ENCODE measurements at regions of chr5 and their contacts with region 1.

Region 1: DNA sequence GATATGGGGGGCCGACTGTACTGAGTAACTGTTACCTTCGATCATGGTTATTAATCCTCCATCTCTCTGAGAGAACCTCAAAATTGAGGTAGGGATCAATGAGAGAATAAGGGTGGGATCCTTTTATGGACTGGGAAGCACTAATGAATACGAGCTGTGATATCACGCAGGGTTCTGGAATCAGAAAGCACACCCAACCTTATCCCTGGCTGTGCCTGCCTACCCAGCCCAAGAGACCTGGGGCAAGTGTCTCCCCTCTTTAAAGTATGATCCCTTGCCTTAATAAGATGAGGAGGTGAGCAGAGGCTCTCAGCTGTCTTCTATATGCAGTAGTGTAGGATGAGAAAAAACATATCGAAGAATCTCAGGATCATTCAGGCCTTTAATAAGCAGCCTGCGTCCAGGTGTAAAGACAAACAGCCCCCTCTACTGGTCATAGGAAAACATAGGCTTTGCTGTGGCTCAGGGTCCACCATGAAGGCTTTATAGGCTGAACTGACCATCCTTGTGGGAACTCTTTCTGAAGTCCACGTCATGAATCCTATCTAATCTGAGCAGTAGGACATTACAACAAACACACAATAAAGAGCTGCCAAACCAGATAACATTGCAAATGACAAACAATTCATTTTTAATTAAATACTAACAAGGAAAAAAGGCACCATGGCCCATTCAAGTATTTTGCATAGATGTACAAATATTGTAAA is 16.8 kb downstream of the NIPAL4 start:
- DNase-seq: peak; percentile 70 to 75 (median 72)
- ATAC-seq: peak; percentile 95
- H3K4me3 ChIP-seq: no peak overlapping the region
- H3K27ac ChIP-seq: no peak overlapping the region
- H3K4me1 ChIP-seq: no peaks in the 10 kb centered on the region; a peak in 1 of 5 replicates
- H3K27me3 ChIP-seq: peaks cover 0 to 25% of the 10 kb centered on the region in 2 experiments; a peak in 3 of 5 replicates
- CTCF ChIP-seq: peak; percentile 71 to 92 (median 80)
- EP300 ChIP-seq: no peak
- POLR2A ChIP-seq: no peak
- RAD21 ChIP-seq: peak; percentile 84 to 87

Region 2: DNA sequence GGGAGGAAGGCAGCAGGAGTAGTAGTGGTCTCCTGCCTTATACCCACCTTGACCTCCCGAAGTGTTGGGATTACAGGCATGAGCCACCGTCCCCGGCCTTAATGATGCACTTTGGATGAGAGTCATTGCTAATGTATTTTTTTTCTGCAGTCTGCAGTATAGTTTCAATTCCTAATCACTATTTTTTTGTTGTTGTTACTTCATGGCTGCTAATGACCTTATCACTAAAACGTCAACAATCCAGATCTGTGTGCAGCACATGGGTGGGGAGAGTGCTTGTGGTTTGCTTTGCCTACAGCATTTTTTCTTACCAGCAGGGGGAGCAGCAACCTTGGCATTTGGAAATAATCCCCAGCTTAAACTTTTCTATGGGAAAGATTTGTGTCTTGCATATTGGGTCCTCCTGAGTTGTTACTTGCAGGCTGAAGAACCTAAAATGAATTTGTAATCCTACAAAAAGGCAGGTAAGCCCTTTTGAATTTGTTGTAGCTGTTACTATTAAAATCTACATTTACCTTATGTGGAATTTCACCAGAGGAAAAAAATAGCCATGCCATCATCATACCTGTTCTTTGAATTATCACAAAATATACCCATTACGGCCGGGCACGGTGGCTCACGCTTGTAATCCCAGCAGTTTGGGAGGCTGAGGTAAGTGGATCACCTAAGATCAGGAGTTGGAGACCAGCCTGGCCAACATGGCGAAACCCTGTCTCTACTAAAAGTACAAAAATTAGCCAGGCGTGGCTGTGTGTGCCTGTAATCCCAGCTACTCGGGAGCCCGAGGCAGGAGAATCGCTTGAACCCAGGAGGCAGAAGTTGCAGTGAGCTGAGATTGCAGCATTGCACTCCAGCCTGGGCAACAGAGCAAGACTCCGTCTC is 327.9 kb before region 1 on chr5:
- CTCF ChIA-PET with region 1: no interaction called
- POLR2A ChIA-PET with region 1: no interaction called
- in situ Hi-C with region 1: no loop called
- intact Hi-C with region 1: loop called (anchors 1 kb)
- DNase-seq: peak; percentile 71 to 79 (median 74)
- ATAC-seq: peak; percentile 95
- H3K4me3 ChIP-seq: no peak overlapping the region
- H3K27ac ChIP-seq: no peak overlapping the region
- H3K4me1 ChIP-seq: peaks cover 0 to 5% of the 10 kb centered on the region in 2 experiments; a peak in 3 of 5 replicates
- H3K27me3 ChIP-seq: no peaks in the 10 kb centered on the region; a peak in 1 of 5 replicates
- CTCF ChIP-seq: peak; percentile 75 to 89 (median 83)
- EP300 ChIP-seq: no peak
- POLR2A ChIP-seq: no peak
- RAD21 ChIP-seq: peak; percentile 76 to 79

Region 3: DNA sequence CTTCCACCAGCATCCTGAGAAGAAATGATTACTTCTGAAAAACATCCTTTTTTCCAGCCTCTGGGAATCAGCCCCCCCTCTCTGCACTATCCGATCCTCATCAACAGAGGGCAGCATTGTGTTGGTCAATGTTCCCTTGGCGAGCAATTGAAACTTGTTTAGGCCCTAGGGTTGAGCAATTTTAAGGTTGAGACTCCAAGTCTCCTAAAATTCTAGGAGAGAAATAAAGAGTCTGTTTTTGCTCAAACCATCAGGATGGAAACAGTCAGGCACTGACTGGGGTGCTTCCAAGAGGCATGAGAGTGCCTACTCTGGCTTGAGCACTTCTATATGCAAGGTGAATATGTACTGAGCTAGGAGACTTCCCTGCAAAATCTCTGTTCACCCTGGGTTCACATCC is 223.3 kb before region 1 on chr5:
- CTCF ChIA-PET with region 1: no interaction called
- POLR2A ChIA-PET with region 1: interaction called, 4 read pairs
- in situ Hi-C with region 1: loop called (anchors 10 kb)
- intact Hi-C with region 1: loop called (anchors 5 kb)
- DNase-seq: peak; percentile 41 to 66 (median 59)
- ATAC-seq: peak; percentile 87
- H3K4me3 ChIP-seq: no peak overlapping the region
- H3K27ac ChIP-seq: no peak overlapping the region
- H3K4me1 ChIP-seq: no peaks in the 10 kb centered on the region
- H3K27me3 ChIP-seq: peaks cover 0 to 5% of the 10 kb centered on the region in 2 experiments; a peak in 1 of 5 replicates
- CTCF ChIP-seq: peak; percentile 73 to 91 (median 80)
- EP300 ChIP-seq: no peak
- POLR2A ChIP-seq: no peak
- RAD21 ChIP-seq: peak; percentile 90 to 93

Region 4: GRCh38 chr5:157342822-157343402 is 133.9 kb before region 1 on chr5:
- CTCF ChIA-PET with region 1: interaction called, 8 read pairs
- POLR2A ChIA-PET with region 1: no interaction called
- in situ Hi-C with region 1: loop called (anchors 5 kb)
- intact Hi-C with region 1: loop called (anchors 5 kb)
- DNase-seq: peak; percentile 49 to 61 (median 52)
- ATAC-seq: peak; percentile 92
- H3K4me3 ChIP-seq: no peak overlapping the region
- H3K27ac ChIP-seq: no peak overlapping the region
- H3K4me1 ChIP-seq: no peaks in the 10 kb centered on the region
- H3K27me3 ChIP-seq: peaks cover 6 to 15% of the 10 kb centered on the region in 2 experiments; a peak in 4 of 5 replicates
- CTCF ChIP-seq: peak; percentile 67 to 75 (median 67)
- EP300 ChIP-seq: no peak
- POLR2A ChIP-seq: no peak
- RAD21 ChIP-seq: peak; percentile 41 to 57

Region 5: DNA sequence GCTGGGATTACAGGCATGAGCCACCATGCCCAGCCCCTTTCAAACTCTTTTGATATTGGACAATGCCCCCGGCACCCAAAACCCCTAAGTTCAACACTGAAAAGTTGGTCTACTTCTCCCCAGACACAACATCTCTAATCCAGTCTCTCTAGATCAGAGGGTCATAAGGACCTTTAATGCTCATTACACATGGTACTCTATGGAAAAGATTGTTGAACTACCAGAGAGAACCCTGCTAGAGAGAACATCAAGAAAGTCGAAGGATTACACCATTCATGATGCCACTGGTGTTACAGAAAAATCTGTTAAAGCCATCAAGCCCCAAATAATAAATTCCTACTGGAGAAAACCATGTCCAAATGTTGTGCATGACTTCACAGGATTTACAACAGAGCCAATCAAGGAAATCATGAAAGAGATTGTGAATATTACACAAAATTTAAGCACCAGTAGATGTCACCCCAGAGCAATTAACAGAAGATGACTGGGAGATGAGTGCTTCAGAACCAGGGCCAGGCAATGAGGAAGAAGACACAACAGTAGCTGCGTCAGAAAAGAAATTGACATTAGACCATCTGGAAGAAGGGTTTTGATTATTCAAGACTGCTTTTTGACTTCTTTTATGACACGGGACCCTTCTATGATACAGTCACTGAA is 45.2 kb before region 1 on chr5:
- CTCF ChIA-PET with region 1: interaction called, 9 read pairs
- POLR2A ChIA-PET with region 1: no interaction called
- in situ Hi-C with region 1: no loop called
- intact Hi-C with region 1: loop called (anchors 2 kb)
- DNase-seq: peak in 1 of 4 experiments; percentile 43
- ATAC-seq: peak; percentile 81
- H3K4me3 ChIP-seq: no peak overlapping the region
- H3K27ac ChIP-seq: no peak overlapping the region
- H3K4me1 ChIP-seq: no peaks in the 10 kb centered on the region
- H3K27me3 ChIP-seq: no peaks in the 10 kb centered on the region
- CTCF ChIP-seq: peak; percentile 54 to 63 (median 55)
- EP300 ChIP-seq: no peak
- POLR2A ChIP-seq: no peak
- RAD21 ChIP-seq: peak; percentile 75 to 77

Region 6: DNA sequence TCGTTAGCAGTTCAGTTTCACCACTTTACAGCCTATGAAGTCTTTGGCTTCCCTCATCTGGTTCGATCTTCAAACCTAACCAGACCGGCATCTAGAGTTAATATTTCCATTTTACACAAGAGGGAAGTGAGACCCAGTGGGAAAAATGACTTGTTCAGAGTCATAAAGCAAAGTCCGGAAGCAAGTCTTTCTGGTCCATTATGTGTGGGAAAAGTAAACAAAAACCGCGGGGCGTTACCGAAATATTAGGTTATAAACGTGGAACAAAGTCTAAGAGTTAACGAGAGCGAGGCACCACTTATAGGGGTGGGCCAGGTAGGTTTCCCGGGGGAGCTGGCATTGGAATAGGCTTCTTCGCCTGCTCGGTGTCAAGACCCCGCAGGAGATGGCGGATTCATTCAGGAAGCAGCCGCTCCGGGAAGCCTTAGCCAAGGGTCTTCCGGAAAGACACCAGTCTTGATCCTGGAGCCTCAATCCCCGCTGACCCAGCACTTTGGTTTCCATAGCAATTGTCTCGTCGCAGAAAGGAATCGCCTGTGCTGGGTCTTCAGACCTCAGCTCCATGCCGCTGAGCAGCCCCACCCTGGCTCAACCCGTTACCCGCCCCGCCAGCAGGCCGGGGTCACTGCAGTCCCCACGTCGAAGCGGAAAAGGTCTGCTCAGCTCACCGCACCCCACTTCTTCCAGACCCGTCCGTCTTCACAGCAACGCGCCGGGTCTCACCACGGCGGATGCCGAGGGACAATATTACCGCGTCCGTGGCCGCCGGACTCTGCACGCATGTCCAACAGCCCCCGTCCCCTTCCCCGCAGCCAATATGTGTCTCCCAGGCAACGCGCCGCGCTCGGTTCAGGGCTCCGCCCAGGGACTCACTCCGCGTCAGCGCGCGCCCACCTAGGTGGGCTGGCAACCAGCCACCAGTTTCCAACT is 194.1 kb after region 1 on chr5 and contains the start of gene C5orf52:
- CTCF ChIA-PET with region 1: no interaction called
- POLR2A ChIA-PET with region 1: no interaction called
- in situ Hi-C with region 1: no loop called
- intact Hi-C with region 1: no loop called
- DNase-seq: no peak
- ATAC-seq: no peak
- H3K4me3 ChIP-seq: no peak within 1 kb of the TSS
- H3K27ac ChIP-seq: no peak within 1 kb of the TSS
- H3K4me1 ChIP-seq: peaks cover 0 to 10% of the 10 kb centered on the region in 2 experiments; a peak in 1 of 5 replicates
- H3K27me3 ChIP-seq: peaks cover 0 to 27% of the 10 kb centered on the region in 2 experiments; a peak in 2 of 5 replicates
- CTCF ChIP-seq: no peak
- EP300 ChIP-seq: no peak
- POLR2A ChIP-seq: no peak
- RAD21 ChIP-seq: no peak
- polyA plus RNA-seq, gene C5orf52: not detected

Region 7: GRCh38 chr5:157743163-157744050 is 266.6 kb after region 1 on chr5 and contains the start of gene LSM11:
- CTCF ChIA-PET with region 1: interaction called, 3 read pairs
- POLR2A ChIA-PET with region 1: no interaction called
- in situ Hi-C with region 1: no loop called
- intact Hi-C with region 1: loop called (anchors 5 kb)
- DNase-seq: peak; percentile 92 to 95 (median 94)
- ATAC-seq: peak; percentile 95
- H3K4me3 ChIP-seq: peak within 1 kb of the TSS; percentile 72
- H3K27ac ChIP-seq: peak within 1 kb of the TSS; percentile 59; the same call in 2 of the 3 replicates
- H3K4me1 ChIP-seq: peaks cover 19 to 27% of the 10 kb centered on the region in 2 experiments; a peak in 4 of 5 replicates
- H3K27me3 ChIP-seq: no peaks in the 10 kb centered on the region
- CTCF ChIP-seq: peak; percentile 99 to 100 (median 100)
- EP300 ChIP-seq: no peak
- POLR2A ChIP-seq: 0 out of 2 replicates have a peak, but pooled peaks have one; percentile 34
- RAD21 ChIP-seq: peak; percentile 97
- polyA plus RNA-seq, gene LSM11: 1.8 to 2.6 TPM